A549 (cell line): ENCODE measurements at regions of chr13 and their contacts with region 1.

Region 1: GRCh38 chr13:19601749-19602725 is 31.4 kb upstream of the MPHOSPH8 start:
- DNase-seq: peak; percentile 38 to 53
- ATAC-seq: peak; percentile 91
- H3K4me3 ChIP-seq: peak overlapping the region; percentile 73
- H3K27ac ChIP-seq: peak overlapping the region; percentile 93 to 100
- H3K4me1 ChIP-seq: peaks cover 54% of the 10 kb centered on the region
- CTCF ChIP-seq: peak; percentile 22; the same call in 1 of the 3 replicates
- EP300 ChIP-seq: no peak
- POLR2A ChIP-seq: peak; percentile 68
- RAD21 ChIP-seq: 0 out of 5 replicates have a peak, but pooled peaks of 1 of the 2 experiments have one; percentile 11

Region 2: DNA sequence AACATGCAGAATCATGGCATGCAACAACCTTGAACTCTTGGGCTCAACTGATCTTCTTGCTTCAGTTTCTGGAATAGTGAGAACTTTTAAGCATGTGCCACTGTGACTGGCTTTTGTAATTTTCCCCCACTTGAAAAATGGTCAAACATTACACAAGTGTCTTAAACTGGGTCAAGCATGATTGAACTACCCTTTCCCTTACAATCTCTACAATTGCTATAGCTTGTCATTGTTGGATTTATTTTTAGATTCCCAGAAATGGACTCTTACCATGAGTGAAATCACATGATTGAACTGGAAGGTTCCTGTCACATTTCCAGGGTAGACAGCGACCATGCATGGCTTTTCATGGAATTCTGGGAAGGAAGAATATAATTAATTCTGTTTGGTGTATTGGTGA is 318.2 kb before region 1 on chr13:
- CTCF ChIA-PET with region 1: no interaction called
- POLR2A ChIA-PET with region 1: no interaction called
- DNase-seq: no peak
- ATAC-seq: no peak
- H3K4me3 ChIP-seq: no peak overlapping the region
- H3K27ac ChIP-seq: no peak overlapping the region
- H3K4me1 ChIP-seq: no peaks in the 10 kb centered on the region
- CTCF ChIP-seq: no peak
- EP300 ChIP-seq: no peak
- POLR2A ChIP-seq: no peak
- RAD21 ChIP-seq: no peak

Region 3: GRCh38 chr13:19587635-19588300 is 14.3 kb before region 1 on chr13:
- CTCF ChIA-PET with region 1: interaction called, 22 read pairs
- POLR2A ChIA-PET with region 1: no interaction called
- DNase-seq: peak; percentile 18 to 74
- ATAC-seq: peak; percentile 98 to 100
- H3K4me3 ChIP-seq: no peak overlapping the region
- H3K27ac ChIP-seq: no peak overlapping the region
- H3K4me1 ChIP-seq: no peaks in the 10 kb centered on the region
- CTCF ChIP-seq: peak; percentile 81
- EP300 ChIP-seq: no peak
- POLR2A ChIP-seq: no peak
- RAD21 ChIP-seq: peak; percentile 79 to 83

Region 4: DNA sequence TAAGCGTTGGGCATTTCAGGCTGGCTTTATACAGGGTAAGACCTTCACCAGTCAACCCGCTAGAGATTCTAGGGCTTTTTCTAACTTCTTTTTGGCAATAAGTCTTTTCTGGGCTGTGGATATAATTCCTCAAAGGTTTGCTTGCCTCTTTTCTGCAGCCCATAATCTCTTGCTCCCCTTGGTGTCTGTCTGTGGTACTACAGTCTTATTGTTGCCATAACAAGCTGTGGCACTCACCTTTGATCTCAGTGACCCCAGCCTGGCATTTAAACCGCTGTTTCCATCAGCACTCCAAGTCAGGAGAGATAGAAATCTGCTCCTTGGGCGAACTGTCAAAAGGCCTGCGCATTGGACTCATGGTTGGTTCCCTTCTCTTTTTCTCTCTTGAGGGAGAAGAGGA is 16.9 kb after region 1 on chr13:
- CTCF ChIA-PET with region 1: interaction called, 10 read pairs
- POLR2A ChIA-PET with region 1: no interaction called
- DNase-seq: peak in 1 of 2 experiments; percentile 36
- ATAC-seq: peak; percentile 34 to 53; a peak in 1 of 6 replicates
- H3K4me3 ChIP-seq: no peak overlapping the region
- H3K27ac ChIP-seq: no peak overlapping the region
- H3K4me1 ChIP-seq: peaks cover 9% of the 10 kb centered on the region; the same call in 2 of the 3 replicates
- CTCF ChIP-seq: peak; percentile 22; the same call in 2 of the 3 replicates
- EP300 ChIP-seq: no peak
- POLR2A ChIP-seq: no peak
- RAD21 ChIP-seq: peak; percentile 40 to 52; a peak in 4 of 5 replicates